CD8-positive, alpha-beta T cell (primary cell): ENCODE measurements at regions of chrX and their contacts with region 1.

Region 1: GRCh38 chrX:44619039-44619438 is 76.4 kb upstream of the FUNDC1 start:
- DNase-seq: no peak
- ATAC-seq: no peak
- H3K4me3 ChIP-seq: no peak overlapping the region
- H3K4me3 Mint-ChIP-seq: no peak overlapping the region
- H3K27ac ChIP-seq: no peak overlapping the region
- H3K27ac Mint-ChIP-seq: no peak overlapping the region
- H3K4me1 ChIP-seq: no peaks in the 10 kb centered on the region
- H3K4me1 Mint-ChIP-seq: no peaks in the 10 kb centered on the region
- H3K27me3 ChIP-seq: no peaks in the 10 kb centered on the region
- H3K27me3 Mint-ChIP-seq: no peaks in the 10 kb centered on the region
- CTCF ChIP-seq: no peak

Region 2: GRCh38 chrX:43909159-43909558 is 709.9 kb before region 1 on chrX:
- CTCF ChIA-PET with region 1: no interaction called
- POLR2A ChIA-PET with region 1: no interaction called
- intact Hi-C with region 1: loop called in 1 of 2 experiments (anchors 5 kb)
- DNase-seq: no peak
- ATAC-seq: no peak
- H3K4me3 ChIP-seq: no peak overlapping the region
- H3K4me3 Mint-ChIP-seq: no peak overlapping the region
- H3K27ac ChIP-seq: no peak overlapping the region
- H3K27ac Mint-ChIP-seq: no peak overlapping the region
- H3K4me1 ChIP-seq: no peaks in the 10 kb centered on the region
- H3K4me1 Mint-ChIP-seq: no peaks in the 10 kb centered on the region
- H3K27me3 ChIP-seq: no peaks in the 10 kb centered on the region
- H3K27me3 Mint-ChIP-seq: peaks cover 1% of the 10 kb centered on the region
- CTCF ChIP-seq: no peak